AG04449 (cell line): ENCODE measurements at regions of chr7 and their contacts with region 1.

Region 1: GRCh38 chr7:40493609-40494051 is 358.8 kb downstream of the SUGCT start:
- DNase-seq: no peak
- H3K4me3 ChIP-seq: no peak overlapping the region
- CTCF ChIP-seq: no peak

Region 2: DNA sequence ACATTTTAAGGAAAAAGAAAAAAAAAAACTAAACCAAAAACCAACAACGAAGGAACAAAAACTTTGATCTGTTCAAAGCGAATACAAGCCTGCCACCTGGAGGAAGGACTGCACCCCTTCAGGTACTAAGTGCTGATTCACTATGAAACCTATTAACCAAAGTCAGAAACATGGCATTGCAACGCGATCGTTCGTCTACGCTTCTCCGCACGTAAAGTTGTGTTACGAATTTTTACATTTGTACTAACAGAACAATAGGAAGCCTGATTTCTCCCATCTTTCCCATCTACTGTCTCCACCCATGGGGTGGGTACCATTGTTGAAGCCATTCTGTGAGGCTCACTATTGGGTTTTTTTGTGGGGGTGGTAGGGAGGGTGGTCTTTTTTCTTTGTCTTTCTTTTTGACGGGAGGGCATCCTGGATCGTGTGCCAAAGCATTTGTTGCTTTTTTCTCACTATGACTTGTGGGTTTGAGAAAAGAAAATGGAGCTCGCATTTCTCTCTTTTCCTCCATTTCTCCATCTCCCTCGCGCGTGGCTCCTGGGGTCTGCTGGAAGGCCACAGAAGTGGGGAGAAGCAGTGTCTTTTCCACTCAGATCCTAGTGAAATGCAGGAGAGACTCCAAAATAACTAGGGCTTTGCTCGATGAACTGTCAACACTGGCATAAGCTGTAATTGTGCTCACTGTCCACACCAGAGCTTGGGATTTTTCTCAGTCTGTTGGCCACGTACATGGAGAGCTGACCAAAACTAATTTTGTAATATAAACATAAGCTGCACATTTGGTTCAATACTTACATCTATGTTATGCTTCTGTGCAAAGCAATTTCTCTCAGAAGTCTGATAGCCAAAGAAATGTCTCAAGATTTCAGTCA is 1028.3 kb before region 1 on chr7:
- CTCF ChIA-PET with region 1: no interaction called
- POLR2A ChIA-PET with region 1: no interaction called
- DNase-seq: peak; percentile 7
- H3K4me3 ChIP-seq: no peak overlapping the region
- CTCF ChIP-seq: peak; percentile 73

Region 3: GRCh38 chr7:40483630-40484029 is 10.0 kb before region 1 on chr7:
- CTCF ChIA-PET with region 1: interaction called, 10 read pairs
- POLR2A ChIA-PET with region 1: no interaction called
- DNase-seq: no peak
- H3K4me3 ChIP-seq: no peak overlapping the region
- CTCF ChIP-seq: peak; percentile 19